PC-9 (cell line): ENCODE measurements at regions of chr19 and their contacts with region 1.

Region 1: DNA sequence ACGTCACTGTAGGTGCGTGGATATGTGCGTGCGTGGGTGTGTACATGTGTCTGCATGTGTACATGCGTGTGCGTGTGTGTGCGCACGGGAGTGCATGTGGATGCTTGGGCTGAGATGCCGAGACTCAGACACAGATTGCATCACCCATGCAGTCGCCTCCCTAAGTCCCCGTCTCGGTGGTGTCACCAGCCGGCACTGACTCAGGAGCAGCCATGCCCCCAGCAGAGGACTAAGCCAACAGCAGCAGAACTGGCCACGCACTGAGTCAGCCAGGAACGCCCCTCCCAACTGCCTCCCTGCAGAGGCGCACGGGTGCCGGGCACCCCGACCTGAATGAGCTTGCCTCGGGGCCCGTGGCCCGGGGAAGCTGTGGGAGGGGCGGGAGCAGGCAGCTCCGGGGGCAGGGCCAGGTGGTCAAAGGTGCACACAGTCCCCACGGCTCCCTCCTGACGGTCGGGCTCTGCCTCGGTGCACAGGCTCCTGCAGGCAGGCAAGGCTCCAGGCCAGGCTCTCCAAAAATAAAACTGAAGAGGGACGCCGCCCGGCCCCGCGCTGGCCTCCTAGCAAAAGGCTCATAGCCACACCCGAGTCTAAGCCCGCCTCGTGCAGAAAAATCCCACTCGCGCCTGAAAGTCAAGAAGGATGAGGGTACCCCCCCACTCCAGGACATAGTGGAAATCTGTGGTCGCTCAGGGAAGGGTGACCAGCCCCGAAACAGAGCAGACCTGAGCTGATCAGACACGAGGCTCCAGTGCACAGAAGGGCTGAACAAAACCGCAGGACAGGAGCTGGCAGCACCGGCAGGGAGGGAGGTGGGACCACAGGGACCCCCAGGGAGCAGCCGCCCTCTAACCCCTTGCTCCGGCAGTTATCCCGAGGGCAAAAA is 49.2 kb downstream of the GADD45B start:
- DNase-seq: peak; percentile 88 to 93
- H3K4me3 ChIP-seq: peak overlapping the region; percentile 50
- H3K27ac ChIP-seq: peak overlapping the region; percentile 88
- H3K4me1 ChIP-seq: peaks cover 41% of the 10 kb centered on the region
- H3K27me3 ChIP-seq: no peaks in the 10 kb centered on the region
- CTCF ChIP-seq: no peak

Region 2: DNA sequence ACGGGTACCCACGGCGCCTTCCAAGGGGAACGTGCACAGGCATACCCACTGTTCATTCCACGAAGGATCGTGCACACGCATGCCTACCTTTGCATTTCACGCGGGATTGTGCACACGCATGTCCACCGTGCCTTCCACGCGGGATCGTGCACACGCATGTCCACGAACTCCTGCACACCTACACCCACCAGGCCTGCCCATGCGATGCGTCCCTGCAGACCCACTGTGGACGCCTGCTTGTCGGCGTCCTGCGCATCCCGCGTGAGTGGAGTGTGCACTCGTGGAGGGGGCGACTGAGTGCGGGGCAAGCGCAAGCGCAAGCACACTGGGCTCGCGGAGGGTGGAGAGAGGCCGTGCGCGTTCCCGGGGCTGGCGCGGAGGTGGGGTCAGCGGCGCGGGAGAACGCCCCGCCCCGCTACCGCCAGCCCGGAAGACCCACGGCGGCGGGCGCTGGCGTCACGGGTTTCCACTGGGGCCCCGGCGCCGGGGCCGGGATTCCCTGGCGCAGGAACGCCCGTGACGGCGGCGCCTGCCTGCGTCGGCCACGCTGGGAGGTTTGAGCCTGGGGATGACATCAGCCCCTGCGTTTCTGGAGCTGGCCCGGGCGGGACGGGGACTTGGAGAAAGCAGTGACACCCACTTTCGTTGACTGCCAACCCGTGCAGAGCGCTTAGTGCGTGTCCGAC is 30.5 kb before region 1 on chr19:
- CTCF ChIA-PET with region 1: no interaction called
- POLR2A ChIA-PET with region 1: no interaction called
- intact Hi-C with region 1: loop called (anchors 2 kb)
- DNase-seq: peak; percentile 32 to 50
- H3K4me3 ChIP-seq: peak overlapping the region; percentile 62
- H3K27ac ChIP-seq: peak overlapping the region; percentile 75
- H3K4me1 ChIP-seq: peaks cover 37% of the 10 kb centered on the region
- H3K27me3 ChIP-seq: no peaks in the 10 kb centered on the region
- CTCF ChIP-seq: no peak

Region 3: DNA sequence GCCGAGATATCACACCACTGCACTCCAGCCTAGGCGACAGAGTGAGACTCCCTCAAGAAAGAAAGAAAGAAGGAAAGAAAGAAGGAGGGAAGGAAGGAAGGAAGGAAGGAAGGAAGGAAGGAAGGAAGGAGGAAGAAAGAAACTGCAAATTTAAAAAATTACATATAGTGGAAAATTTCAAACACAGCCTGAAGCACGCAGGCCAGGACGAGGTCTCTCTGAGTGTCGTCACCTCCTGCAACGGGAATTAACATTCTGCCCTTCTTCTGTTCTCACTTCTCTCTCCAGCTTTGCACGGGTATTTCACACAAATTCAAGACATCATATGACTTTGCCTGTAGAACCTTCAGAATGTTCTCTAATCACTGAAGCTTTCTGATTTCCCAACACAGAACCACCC is 69.2 kb after region 1 on chr19:
- CTCF ChIA-PET with region 1: no interaction called
- POLR2A ChIA-PET with region 1: no interaction called
- intact Hi-C with region 1: no loop called
- DNase-seq: no peak
- H3K4me3 ChIP-seq: no peak overlapping the region
- H3K27ac ChIP-seq: no peak overlapping the region
- H3K4me1 ChIP-seq: no peaks in the 10 kb centered on the region
- H3K27me3 ChIP-seq: no peaks in the 10 kb centered on the region
- CTCF ChIP-seq: no peak